Calu3 (cell line): ENCODE measurements at regions of chr19 and their contacts with region 1.

Region 1: GRCh38 chr19:6564393-6564792 is 26.6 kb downstream of the CD70 start:
- DNase-seq: no peak
- H3K4me3 Mint-ChIP-seq: no peak overlapping the region
- H3K27ac Mint-ChIP-seq: no peak overlapping the region
- H3K4me1 Mint-ChIP-seq: no peaks in the 10 kb centered on the region
- H3K27me3 Mint-ChIP-seq: no peaks in the 10 kb centered on the region
- CTCF ChIP-seq: no peak

Region 2: DNA sequence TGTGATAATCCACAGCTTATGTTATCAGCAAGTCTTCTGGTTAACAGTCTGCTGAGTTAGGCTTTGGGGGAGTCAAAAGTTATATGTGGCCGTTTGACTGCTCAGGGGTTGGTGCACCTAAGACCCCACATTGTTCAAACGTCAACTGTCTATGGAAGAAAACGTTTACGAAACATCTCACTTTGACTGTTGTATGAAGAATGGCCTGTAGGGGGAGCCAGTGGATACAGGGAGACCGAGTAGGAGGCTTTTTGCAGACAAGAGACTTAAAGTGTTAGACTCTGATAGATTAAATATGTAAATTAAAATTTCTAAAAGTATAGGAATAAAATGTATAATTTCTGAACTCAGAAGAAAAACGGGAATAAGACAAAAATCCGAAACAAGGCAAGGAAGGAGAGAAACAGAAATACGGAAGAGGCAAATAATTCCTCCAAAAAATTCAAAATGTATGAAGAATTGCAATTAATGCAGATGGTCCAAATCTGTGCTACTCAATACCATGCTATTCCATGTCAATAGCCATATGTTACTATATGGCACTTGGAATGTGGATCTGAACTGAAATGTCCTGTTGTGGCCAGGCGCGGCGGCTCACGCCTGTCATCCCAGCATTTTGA is 67.7 kb after region 1 on chr19:
- CTCF ChIA-PET with region 1: no interaction called
- intact Hi-C with region 1: loop called (anchors 2 kb)
- DNase-seq: peak; percentile 75
- H3K4me3 Mint-ChIP-seq: no peak overlapping the region
- H3K27ac Mint-ChIP-seq: no peak overlapping the region
- H3K4me1 Mint-ChIP-seq: peaks cover 10% of the 10 kb centered on the region
- H3K27me3 Mint-ChIP-seq: peaks cover 12% of the 10 kb centered on the region
- CTCF ChIP-seq: peak; percentile 17